ENCODE measurements at regions of chrX and their contacts with region 1.

Region 1: GRCh38 chrX:12974796-12975669 is at the start of gene TMSB4X:
- DNase-seq: peak; percentile 78 to 91
- H3K4me3 ChIP-seq: peak within 1 kb of the TSS; percentile 86 to 87
- H3K27ac ChIP-seq: peak within 1 kb of the TSS; percentile 92 to 98
- H3K4me1 ChIP-seq: peaks cover 0 to 49% (median 3%) of the 10 kb centered on the region in 4 donors
- H3K27me3 ChIP-seq: no peaks in the 10 kb centered on the region
- CTCF ChIP-seq: peak in 1 of 2 experiments; percentile 8

Region 2: GRCh38 chrX:13092455-13092941 is 117.5 kb after region 1 on chrX:
- intact Hi-C with region 1: loop called (anchors 10 kb)
- DNase-seq: no peak
- H3K4me3 ChIP-seq: no peak overlapping the region
- H3K27ac ChIP-seq: peak overlapping the region; percentile 62 to 66
- H3K4me1 ChIP-seq: peaks cover 0 to 35% (median 0%) of the 10 kb centered on the region in 4 donors
- H3K27me3 ChIP-seq: no peaks in the 10 kb centered on the region
- CTCF ChIP-seq: no peak

Region 3: DNA sequence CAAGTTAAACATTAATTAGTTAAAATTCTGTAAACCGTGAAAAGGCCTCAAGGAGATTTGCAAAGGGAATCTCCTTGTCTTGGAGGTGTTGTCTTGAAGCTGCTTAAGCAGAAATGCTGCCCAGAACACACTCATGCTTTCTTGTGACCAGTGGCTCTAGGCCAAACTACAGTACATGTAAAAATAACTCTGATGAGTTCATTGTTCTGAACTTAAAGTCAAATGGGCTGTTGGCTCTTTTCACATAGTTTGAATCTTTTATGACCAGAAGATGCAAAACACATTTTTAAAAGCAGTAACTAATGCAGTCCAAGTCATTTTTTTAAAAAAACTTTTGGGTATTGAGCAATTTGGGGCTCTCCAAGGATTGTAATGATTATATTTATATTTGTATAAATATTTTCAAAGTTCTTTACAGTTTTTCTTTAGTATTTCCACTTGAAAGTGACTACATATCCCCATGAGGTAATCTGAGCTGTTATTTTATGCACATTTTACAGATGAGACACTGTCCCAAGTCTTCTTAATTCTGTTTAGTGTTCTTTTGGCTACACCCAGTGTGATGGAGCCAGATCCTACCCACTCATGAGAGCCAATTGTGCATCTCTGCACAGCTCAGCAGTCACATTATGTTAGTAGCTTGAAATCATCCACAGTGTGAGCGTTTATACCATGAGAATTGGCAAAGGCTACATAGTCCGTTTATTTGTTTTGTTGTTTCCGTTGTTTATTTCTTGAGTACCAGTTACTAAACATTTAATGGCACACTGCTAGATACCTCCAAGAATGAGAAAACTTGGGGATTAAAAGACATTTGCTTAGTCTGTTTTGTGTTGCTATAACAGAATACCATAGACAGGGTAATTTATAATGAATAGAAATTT is 457.6 kb after region 1 on chrX:
- intact Hi-C with region 1: loop called (anchors 5 kb)
- DNase-seq: peak; percentile 66 to 68
- H3K4me3 ChIP-seq: no peak overlapping the region
- H3K27ac ChIP-seq: peak overlapping the region; percentile 52 to 65
- H3K4me1 ChIP-seq: peaks cover 0 to 18% (median 7%) of the 10 kb centered on the region in 4 donors
- H3K27me3 ChIP-seq: no peaks in the 10 kb centered on the region
- CTCF ChIP-seq: no peak

Region 4: GRCh38 chrX:13487731-13488523 is 512.9 kb after region 1 on chrX:
- intact Hi-C with region 1: loop called (anchors 5 kb)
- DNase-seq: peak; percentile 24 to 60
- H3K4me3 ChIP-seq: no peak overlapping the region
- H3K27ac ChIP-seq: peak overlapping the region; percentile 74 to 79
- H3K4me1 ChIP-seq: peaks cover 0 to 42% (median 2%) of the 10 kb centered on the region in 4 donors
- H3K27me3 ChIP-seq: no peaks in the 10 kb centered on the region
- CTCF ChIP-seq: peak; percentile 55 to 78